Mucosa of descending colon (tissue), 3 donors: ENCODE measurements at regions of chr5 and their contacts with region 1.

Region 1: DNA sequence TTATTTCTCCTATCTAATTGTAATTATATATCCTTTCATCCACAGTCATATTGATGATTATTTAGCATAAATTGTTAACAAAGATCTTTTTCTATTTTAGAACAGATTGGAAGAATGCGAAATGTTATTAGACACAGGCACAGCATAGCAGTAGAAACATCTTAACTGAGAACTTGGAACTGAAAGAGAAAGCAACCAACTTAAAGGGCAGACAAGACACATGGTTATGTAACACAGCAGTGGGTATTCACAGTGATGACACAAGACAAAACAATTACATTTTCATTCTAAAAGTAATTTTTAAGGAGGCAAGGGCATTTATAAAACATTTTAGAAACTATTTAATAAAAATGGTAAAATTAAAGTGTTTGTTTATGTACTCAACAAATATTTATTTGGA is 57.7 kb upstream of the MEF2C start:
- DNase-seq: no peak
- ATAC-seq: no peak
- H3K4me3 ChIP-seq: no peak overlapping the region
- H3K4me1 ChIP-seq: peaks cover 20% of the 10 kb centered on the region
- CTCF ChIP-seq: no peak

Region 2: GRCh38 chr5:88883059-88883835 is 57.5 kb before region 1 on chr5 and contains the start of gene MEF2C:
- intact Hi-C with region 1: loop called in 1 of 2 experiments (anchors 10 kb)
- DNase-seq: peak; percentile 80 to 85 (median 83)
- ATAC-seq: peak; percentile 89
- H3K4me3 ChIP-seq: peak within 1 kb of the TSS; percentile 18
- H3K4me1 ChIP-seq: peaks cover 17% of the 10 kb centered on the region
- CTCF ChIP-seq: no peak
- total RNA-seq, gene MEF2C: 19.3 to 44.0 (median 32.6) TPM